ENCODE measurements at regions of chr19 and their contacts with region 1.

Region 1: DNA sequence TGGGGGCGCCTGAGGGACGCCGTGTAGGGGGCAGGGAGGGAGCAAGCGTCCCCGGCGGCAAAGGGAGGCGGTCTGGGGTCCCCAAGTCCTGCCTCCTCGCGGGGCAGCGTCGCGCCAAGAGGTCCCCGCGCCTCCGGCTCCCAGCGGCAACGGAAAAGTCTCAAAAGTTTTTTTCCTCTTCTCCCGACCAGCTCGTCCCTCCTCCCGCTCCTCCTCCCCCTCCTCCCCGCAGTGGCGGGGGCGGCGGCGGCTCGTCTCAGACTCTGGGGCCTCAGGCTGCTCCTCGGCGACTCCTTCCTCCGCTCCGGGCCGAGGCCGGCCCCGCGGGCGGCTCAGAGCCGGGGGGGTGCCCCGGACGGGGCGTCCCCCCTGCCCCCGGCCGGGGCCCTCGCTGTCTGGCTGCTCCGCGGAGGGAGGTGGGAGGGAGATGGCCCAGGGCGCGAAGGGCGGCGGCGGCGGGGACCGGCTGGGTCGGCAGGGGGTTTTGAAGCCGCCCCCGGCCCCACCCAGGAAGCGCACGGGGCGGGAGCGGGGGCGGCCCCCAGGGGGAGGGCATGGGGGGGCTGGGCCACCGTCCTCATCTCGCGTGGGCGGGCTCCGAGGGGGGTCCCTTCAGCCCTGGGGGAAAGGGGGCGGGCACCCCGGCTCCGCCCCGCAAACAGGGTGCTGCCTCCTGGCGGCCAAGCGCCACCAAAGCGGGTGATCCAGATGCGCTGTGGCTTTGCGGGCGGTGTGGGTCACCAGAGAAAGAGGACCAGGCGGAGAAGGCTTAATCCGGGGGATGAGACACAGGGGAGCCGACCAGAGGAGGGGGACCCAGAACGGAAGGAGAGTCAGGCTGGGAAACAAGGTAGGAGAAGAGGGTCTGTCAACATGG is at the start of gene TGFB1:
- DNase-seq: peak; percentile 94
- H3K4me3 Mint-ChIP-seq: peak within 1 kb of the TSS; percentile 91
- H3K27ac Mint-ChIP-seq: peak within 1 kb of the TSS; percentile 97
- H3K4me1 Mint-ChIP-seq: peaks cover 60% of the 10 kb centered on the region
- H3K27me3 Mint-ChIP-seq: no peaks in the 10 kb centered on the region
- total RNA-seq, gene TGFB1: 94.4 to 95.6 TPM

Region 2: GRCh38 chr19:41206926-41207750 is 146.6 kb before region 1 on chr19:
- CTCF ChIA-PET with region 1: no interaction called
- intact Hi-C with region 1: loop called (anchors 1 kb)
- DNase-seq: no peak
- H3K4me3 Mint-ChIP-seq: no peak overlapping the region
- H3K27ac Mint-ChIP-seq: no peak overlapping the region
- H3K4me1 Mint-ChIP-seq: peaks cover 4% of the 10 kb centered on the region
- H3K27me3 Mint-ChIP-seq: no peaks in the 10 kb centered on the region

Region 3: DNA sequence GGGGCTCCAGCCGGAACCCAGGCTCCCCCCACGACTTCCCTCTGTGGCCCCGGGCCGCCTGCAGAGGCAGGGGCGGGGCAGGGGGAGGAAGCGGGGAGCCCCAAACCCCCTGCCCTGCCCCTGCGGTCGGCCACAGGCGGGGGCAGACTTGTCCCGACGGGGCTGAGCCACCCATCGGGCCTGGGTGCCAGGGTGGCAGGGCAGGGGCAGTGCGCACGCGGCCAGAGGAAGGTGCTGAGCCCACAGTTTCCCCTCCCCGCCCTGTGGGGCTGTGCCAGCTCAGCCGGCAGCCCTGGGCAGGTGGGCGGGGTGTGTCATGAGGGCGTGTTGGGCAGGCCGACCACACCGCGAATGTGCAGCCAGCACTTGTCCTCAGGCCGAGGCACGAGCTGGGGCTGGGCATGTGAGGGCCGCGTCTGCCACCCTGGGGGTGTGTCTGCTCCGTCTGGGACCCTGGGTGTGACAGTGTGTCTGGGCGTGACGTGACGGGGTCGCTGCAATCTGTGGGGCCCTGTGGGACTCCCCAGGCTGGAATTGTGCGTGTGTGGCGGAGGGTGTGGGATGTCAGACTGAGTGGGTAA is 26.0 kb before region 1 on chr19:
- CTCF ChIA-PET with region 1: interaction called, 4 read pairs
- intact Hi-C with region 1: loop called (anchors 1 kb)
- DNase-seq: peak; percentile 80
- H3K4me3 Mint-ChIP-seq: peak overlapping the region; percentile 67
- H3K27ac Mint-ChIP-seq: peak overlapping the region; percentile 93
- H3K4me1 Mint-ChIP-seq: peaks cover 55% of the 10 kb centered on the region
- H3K27me3 Mint-ChIP-seq: no peaks in the 10 kb centered on the region

Region 4: DNA sequence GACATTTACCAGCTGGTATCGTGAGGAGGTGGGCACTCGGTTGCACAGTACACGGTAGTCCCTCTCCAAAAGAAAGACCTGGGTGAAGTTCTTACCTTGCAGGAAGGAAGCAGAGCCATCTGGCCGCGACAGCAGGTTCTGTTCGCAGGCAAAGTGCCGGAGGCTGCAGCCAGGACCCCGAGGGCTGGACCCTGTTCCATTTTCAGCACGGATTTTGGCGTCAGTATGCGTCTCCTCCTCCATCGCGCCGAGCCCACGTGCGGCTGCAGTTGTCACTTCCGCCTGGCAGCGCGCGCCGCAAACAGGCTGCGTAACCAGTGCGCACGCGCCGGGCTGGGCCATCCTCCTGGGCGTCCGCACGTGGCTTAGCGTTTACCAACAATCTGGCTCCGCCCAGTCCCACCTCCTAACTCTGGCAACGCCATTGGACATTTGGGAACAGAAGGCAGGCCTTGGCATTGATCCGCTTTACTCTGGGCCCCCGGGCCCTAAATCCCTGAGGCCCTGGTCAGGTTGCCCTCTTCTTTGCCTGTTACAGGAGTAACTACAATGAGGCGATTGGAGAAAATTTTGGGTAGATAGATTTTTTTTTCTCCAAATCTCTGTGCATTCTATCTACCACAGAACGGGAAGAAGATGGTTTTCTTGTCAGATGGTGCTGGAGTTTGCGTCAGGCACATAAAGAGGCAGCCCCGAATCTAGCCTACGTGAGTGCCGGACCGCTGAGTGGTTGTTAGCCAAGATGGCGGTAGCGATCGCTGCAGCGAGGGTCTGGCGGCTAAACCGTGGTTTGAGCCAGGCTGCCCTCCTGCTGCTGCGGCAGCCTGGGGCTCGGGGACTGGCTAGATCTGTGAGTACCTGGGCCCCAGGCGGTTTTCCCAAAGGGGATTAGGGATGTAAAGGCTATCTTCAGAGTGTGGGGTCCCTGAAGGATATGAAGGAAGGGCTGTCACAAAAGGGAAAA is 43.7 kb after region 1 on chr19 and contains the starts of genes BCKDHA and EXOSC5:
- CTCF ChIA-PET with region 1: no interaction called
- intact Hi-C with region 1: loop called (anchors 1 kb)
- DNase-seq: peak; percentile 100
- H3K4me3 Mint-ChIP-seq: peak within 1 kb of the TSS; percentile 97
- H3K27ac Mint-ChIP-seq: peak within 1 kb of the TSS; percentile 98
- H3K4me1 Mint-ChIP-seq: peaks cover 37% of the 10 kb centered on the region
- H3K27me3 Mint-ChIP-seq: no peaks in the 10 kb centered on the region
- total RNA-seq, gene BCKDHA: 18.2 to 21.7 TPM
- total RNA-seq, gene EXOSC5: 47.5 to 51.7 TPM

Region 5: DNA sequence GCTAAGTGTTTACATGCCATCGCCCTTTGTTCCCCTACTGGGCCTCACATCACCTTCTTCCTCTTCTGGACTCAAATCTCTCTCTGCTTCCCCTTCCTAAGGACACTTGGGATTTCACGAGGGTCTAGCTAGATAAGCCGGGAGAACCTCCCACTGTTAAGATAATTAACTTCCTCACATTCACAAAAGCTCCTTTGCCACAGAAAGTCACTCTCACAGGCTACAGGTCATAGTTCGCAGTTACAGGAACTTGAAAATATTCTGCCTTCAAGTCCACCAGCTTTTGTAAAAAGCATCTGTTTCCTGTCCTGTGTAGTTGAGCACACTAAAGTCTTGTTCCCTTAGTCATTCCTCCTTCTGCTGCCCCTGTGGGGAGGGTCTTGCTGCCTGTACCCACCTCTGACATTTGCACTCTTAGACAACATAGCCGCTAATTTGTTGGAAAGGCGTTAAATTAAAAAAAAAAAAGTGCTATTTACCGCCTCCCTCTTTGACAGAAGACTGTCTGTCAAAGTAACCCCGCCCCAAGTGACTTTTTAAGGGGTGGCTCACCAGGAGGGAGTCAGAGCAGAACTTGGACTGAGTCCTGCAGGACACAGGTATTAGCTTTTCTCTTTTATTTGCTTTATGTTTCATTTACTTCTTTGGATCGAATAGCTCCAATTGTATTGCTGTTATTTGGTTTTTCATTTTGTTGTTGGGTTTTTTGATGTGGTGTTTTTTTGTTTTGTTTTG is 195.4 kb after region 1 on chr19:
- CTCF ChIA-PET with region 1: interaction called, 3 read pairs
- intact Hi-C with region 1: loop called (anchors 5 kb)
- DNase-seq: peak; percentile 90
- H3K4me3 Mint-ChIP-seq: peak overlapping the region; percentile 99
- H3K27ac Mint-ChIP-seq: peak overlapping the region; percentile 100
- H3K4me1 Mint-ChIP-seq: peaks cover 57% of the 10 kb centered on the region
- H3K27me3 Mint-ChIP-seq: no peaks in the 10 kb centered on the region

Region 6: DNA sequence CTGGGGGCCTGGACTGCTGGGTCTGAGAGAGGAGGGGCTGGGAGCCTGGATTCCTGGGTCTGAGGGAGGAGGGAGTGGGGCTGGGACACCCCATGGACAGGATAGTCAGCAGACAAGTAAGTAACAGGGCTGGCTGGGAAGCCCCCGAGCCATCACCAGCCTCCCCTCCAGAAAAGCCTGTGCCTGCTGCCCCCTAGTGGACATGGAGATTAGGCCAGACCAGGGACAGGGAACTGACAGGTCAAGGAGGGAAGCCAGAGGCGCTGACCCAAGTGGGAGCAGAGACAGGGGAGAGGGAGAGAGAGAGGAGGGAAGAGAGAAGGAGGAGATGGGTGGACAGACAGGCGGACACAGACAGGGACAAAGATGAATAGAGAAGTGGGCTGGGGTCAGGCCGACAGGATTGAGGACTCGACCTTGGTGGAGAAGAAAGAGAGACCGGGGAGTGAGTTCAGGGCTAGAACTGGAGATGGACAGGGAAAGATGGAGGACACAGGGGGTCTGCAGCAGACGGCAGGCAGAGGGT is 581.2 kb after region 1 on chr19:
- CTCF ChIA-PET with region 1: no interaction called
- intact Hi-C with region 1: no loop called
- DNase-seq: peak; percentile 94
- H3K4me3 Mint-ChIP-seq: no peak overlapping the region
- H3K27ac Mint-ChIP-seq: peak overlapping the region; percentile 44
- H3K4me1 Mint-ChIP-seq: peaks cover 39% of the 10 kb centered on the region
- H3K27me3 Mint-ChIP-seq: no peaks in the 10 kb centered on the region